Activated CD4-positive, alpha-beta T cell treated with anti-CD3 and anti-CD28 coated beads for 36 hours (primary cell): ENCODE measurements at regions of chr1 and their contacts with region 1.

Region 1: DNA sequence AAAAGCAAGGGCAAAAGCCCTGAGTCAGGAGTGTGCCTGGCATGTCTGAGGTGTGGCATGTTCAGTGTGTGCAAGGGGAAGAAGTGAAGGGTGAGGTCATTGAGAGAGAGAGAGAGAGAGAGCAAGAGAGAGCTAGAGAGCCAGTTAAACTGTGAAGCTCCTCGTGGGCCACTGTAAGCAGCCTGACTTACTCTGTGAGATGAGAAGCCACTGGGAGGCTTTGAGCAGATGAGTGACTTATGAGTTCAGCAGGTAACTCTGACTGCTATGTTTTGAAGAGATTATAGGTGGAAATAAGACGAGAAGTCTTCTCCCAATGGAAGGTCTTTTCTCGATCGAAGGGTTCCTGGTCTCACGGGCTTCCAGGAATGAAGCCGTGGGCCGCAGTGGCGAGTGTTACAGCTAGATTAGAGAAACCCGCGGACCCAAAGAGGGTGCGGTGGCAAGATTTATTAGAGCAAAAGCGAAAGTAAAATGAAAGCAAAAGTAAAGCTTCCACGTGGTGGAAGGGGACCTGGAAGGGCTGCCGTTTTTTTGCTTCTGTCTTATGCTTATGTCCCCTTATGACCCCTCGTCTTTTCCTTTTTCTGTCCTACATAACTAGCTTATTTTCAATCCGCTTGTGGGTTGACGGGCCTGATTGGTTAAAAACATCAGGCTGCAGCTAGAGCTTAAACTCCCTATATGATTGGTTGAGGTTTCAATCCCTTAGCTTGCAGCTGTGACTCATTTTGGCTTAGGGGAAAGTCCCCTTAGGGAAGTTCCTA is 323.1 kb upstream of the FAM78B start:
- DNase-seq: peak; percentile 63
- ATAC-seq: peak; percentile 81
- H3K4me3 Mint-ChIP-seq: no peak overlapping the region
- H3K27ac Mint-ChIP-seq: no peak overlapping the region
- H3K4me1 Mint-ChIP-seq: peaks cover 6% of the 10 kb centered on the region
- H3K27me3 Mint-ChIP-seq: no peaks in the 10 kb centered on the region

Region 2: GRCh38 chr1:165630629-165631341 is 859.1 kb before region 1 on chr1 and contains the start of gene MGST3:
- CTCF ChIA-PET with region 1: no interaction called
- POLR2A ChIA-PET with region 1: no interaction called
- intact Hi-C with region 1: loop called in 1 of 2 experiments (anchors 2 kb)
- DNase-seq: peak; percentile 99
- ATAC-seq: peak; percentile 91
- H3K4me3 Mint-ChIP-seq: no peak within 1 kb of the TSS
- H3K27ac Mint-ChIP-seq: no peak within 1 kb of the TSS
- H3K4me1 Mint-ChIP-seq: peaks cover 17% of the 10 kb centered on the region
- H3K27me3 Mint-ChIP-seq: no peaks in the 10 kb centered on the region
- total RNA-seq, gene MGST3: 49.1 to 52.1 TPM

Region 3: GRCh38 chr1:165768513-165769394 is 721.1 kb before region 1 on chr1 and contains the start of gene TMCO1:
- CTCF ChIA-PET with region 1: no interaction called
- POLR2A ChIA-PET with region 1: no interaction called
- intact Hi-C with region 1: loop called in 1 of 2 experiments (anchors 2 kb)
- DNase-seq: peak; percentile 96
- ATAC-seq: peak; percentile 99
- H3K4me3 Mint-ChIP-seq: peak within 1 kb of the TSS; percentile 92
- H3K27ac Mint-ChIP-seq: peak within 1 kb of the TSS; percentile 99
- H3K4me1 Mint-ChIP-seq: peaks cover 54% of the 10 kb centered on the region
- H3K27me3 Mint-ChIP-seq: no peaks in the 10 kb centered on the region
- total RNA-seq, gene TMCO1: 57.7 to 70.5 TPM

Region 4: GRCh38 chr1:166166695-166167571 is 322.9 kb before region 1 on chr1 and contains the start of gene FAM78B:
- CTCF ChIA-PET with region 1: no interaction called
- POLR2A ChIA-PET with region 1: no interaction called
- intact Hi-C with region 1: loop called in 1 of 2 experiments (anchors 2 kb)
- DNase-seq: peak; percentile 74
- ATAC-seq: peak; percentile 35
- H3K4me3 Mint-ChIP-seq: peak within 1 kb of the TSS; percentile 69
- H3K27ac Mint-ChIP-seq: no peak within 1 kb of the TSS
- H3K4me1 Mint-ChIP-seq: peaks cover 29% of the 10 kb centered on the region
- H3K27me3 Mint-ChIP-seq: peaks cover 31% of the 10 kb centered on the region
- total RNA-seq, gene FAM78B: 0.34 to 0.51 TPM

Region 5: GRCh38 chr1:166838766-166839599 is 349.1 kb after region 1 on chr1 and contains the start of gene POGK:
- CTCF ChIA-PET with region 1: interaction called, 3 read pairs
- POLR2A ChIA-PET with region 1: interaction called, 5 read pairs
- intact Hi-C with region 1: loop called (anchors 1 kb)
- DNase-seq: peak; percentile 93
- ATAC-seq: peak; percentile 97
- H3K4me3 Mint-ChIP-seq: peak within 1 kb of the TSS; percentile 90
- H3K27ac Mint-ChIP-seq: peak within 1 kb of the TSS; percentile 98
- H3K4me1 Mint-ChIP-seq: peaks cover 56% of the 10 kb centered on the region
- H3K27me3 Mint-ChIP-seq: no peaks in the 10 kb centered on the region
- total RNA-seq, gene POGK: 36.2 to 40.6 TPM

Region 6: DNA sequence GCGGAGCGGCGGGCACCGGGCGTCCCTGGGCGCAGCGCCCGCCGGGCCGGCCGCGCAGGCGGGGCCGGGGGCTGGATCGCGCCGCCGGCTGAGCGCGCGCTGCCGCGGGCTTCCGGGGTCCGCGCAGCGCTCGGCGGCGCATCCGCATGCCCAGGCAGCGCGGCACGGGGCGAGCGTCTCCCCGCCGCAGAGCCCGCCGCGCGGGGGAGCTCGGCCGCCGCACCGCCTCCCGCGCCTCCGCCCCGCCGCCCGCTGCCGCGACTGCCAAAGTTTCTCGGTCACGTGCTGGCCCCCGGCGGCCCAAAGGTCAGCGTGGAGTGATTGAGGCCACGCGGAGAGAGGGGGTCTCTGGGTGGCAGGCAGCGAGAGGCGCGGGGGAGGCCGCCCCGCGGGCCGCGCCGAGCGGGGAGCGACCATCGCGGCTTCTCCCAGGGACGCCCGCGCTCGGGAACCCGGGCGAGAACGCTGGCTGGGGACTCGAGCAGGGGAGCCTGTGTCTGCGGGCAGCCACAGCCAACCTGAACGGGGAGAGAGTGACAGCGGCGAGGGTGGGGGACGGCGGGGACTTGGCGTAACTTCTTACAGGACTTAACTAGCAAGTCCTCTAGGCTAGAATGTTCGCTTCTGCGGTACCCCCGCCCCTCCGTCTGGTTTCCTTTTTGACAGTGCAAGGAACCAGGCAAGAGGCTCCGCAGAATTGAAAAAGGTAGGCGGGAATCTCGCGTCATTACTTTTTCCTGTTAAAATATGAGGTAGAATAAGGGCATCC is 485.7 kb after region 1 on chr1 and contains the start of gene ILDR2:
- CTCF ChIA-PET with region 1: no interaction called
- POLR2A ChIA-PET with region 1: no interaction called
- intact Hi-C with region 1: loop called in 1 of 2 experiments (anchors 10 kb)
- DNase-seq: peak; percentile 87
- ATAC-seq: peak; percentile 60
- H3K4me3 Mint-ChIP-seq: peak within 1 kb of the TSS; percentile 93
- H3K27ac Mint-ChIP-seq: peak within 1 kb of the TSS; percentile 99
- H3K4me1 Mint-ChIP-seq: peaks cover 51% of the 10 kb centered on the region
- H3K27me3 Mint-ChIP-seq: peaks cover 21% of the 10 kb centered on the region
- total RNA-seq, gene ILDR2: 9.1 to 14.6 TPM